Lower leg skin (tissue), 4 donors: ENCODE measurements at regions of chrX and their contacts with region 1.

Region 1: DNA sequence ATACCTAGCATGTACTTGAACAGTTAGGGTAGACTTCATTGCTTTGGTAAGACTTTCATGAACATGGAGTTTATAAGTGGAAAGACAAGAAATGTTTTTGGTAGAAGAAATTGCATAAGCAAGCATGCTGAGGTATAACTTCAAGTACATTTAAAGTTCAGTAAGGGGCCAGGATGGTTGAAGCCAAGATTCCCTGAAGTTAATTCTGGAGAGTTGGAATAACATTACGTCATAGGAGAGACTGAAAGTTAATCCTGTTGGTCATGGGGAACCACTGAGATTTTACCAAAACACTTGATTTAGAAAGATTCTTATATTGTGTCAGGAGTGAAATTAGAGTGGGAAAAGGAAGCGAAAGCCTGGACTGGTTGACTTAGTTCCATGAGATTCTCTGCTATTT is 767.5 kb upstream of the MAGEB2 start:
- DNase-seq: no peak
- H3K4me3 ChIP-seq: no peak overlapping the region
- CTCF ChIP-seq: no peak
- POLR2A ChIP-seq: no peak

Region 2: DNA sequence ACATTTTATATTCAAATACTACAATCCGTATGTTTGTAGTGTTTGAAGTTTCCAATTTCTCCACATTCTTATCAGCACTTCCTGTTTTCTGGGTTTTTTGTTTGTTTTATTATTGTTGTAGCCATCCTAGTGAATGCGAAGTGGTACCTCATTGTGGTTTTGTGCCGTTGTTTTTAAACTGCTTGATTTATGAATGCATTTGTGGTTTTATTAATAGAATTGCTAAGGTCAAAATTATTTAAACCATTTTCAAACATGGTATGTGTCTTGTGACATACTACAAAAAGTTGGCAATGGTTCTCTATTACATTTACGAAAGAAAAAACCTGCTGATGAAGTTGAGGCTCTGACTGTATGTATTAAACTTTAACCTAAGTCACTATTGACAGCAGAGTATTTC is 12.5 kb before region 1 on chrX:
- intact Hi-C with region 1: loop called (anchors 1 kb)
- DNase-seq: no peak
- H3K4me3 ChIP-seq: no peak overlapping the region
- CTCF ChIP-seq: no peak
- POLR2A ChIP-seq: no peak